CD4-positive, alpha-beta T cell (primary cell): ENCODE measurements at regions of chr15 and their contacts with region 1.

Region 1: GRCh38 chr15:79989682-79990081 is 18.7 kb upstream of the BCL2A1 start:
- DNase-seq: peak in 2 of 14 experiments; percentile 40 to 53
- ATAC-seq: no peak
- H3K4me3 ChIP-seq: no peak overlapping the region
- H3K4me3 Mint-ChIP-seq: no peak overlapping the region
- H3K27ac ChIP-seq: no peak overlapping the region
- H3K27ac Mint-ChIP-seq: no peak overlapping the region
- H3K4me1 ChIP-seq: peaks cover 4% of the 10 kb centered on the region
- H3K4me1 Mint-ChIP-seq: peaks cover 4% of the 10 kb centered on the region
- H3K27me3 ChIP-seq: no peaks in the 10 kb centered on the region
- H3K27me3 Mint-ChIP-seq: no peaks in the 10 kb centered on the region
- CTCF ChIP-seq: no peak

Region 2: DNA sequence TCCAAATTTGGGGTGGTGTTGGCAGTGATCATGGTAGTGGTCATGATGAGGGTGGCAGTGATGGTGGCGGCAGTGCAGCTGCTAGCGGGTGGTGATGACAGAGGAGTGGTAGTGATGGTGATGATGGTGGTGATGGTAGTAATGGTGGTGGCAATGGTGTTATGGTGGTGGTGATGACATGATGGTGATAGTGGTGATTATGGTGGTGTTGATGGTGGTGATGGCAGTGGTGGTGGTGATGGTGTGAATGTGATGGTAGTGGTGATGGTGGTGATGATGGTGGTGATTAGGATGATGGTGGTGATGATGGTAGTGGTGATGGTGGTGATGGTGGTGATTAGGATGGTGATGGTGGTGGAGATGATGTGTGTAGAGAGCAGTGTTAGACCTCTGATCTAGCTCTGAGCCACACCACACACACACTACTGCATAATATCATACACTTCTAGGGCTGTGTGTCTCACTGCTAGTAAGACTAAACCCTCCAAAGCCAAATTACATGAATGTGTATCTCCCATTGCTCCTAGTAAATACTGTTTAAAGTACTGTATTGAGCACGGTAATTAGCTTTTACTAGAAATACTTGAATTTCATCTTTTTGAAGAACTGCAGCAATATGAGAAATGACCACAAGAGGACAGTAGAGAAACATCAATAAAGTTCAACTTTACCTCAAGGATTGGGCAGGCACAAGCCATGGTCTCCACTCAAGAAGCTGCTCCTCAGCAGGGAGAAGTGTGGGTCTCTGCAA is 649.9 kb before region 1 on chr15:
- CTCF ChIA-PET with region 1: no interaction called
- POLR2A ChIA-PET with region 1: no interaction called
- intact Hi-C with region 1: loop called in 1 of 2 experiments (anchors 1 kb)
- DNase-seq: peak in 3 of 14 experiments; percentile 9 to 22 (median 21)
- ATAC-seq: no peak
- H3K4me3 ChIP-seq: no peak overlapping the region
- H3K4me3 Mint-ChIP-seq: no peak overlapping the region
- H3K27ac ChIP-seq: no peak overlapping the region
- H3K27ac Mint-ChIP-seq: no peak overlapping the region
- H3K4me1 ChIP-seq: no peaks in the 10 kb centered on the region
- H3K4me1 Mint-ChIP-seq: no peaks in the 10 kb centered on the region
- H3K27me3 ChIP-seq: no peaks in the 10 kb centered on the region
- H3K27me3 Mint-ChIP-seq: no peaks in the 10 kb centered on the region
- CTCF ChIP-seq: peak; percentile 57

Region 3: GRCh38 chr15:79769069-79769481 is 220.6 kb before region 1 on chr15:
- CTCF ChIA-PET with region 1: no interaction called
- POLR2A ChIA-PET with region 1: no interaction called
- intact Hi-C with region 1: loop called in 1 of 2 experiments (anchors 5 kb)
- DNase-seq: peak in 3 of 14 experiments; percentile 4 to 15 (median 13)
- ATAC-seq: no peak
- H3K4me3 ChIP-seq: no peak overlapping the region
- H3K4me3 Mint-ChIP-seq: no peak overlapping the region
- H3K27ac ChIP-seq: no peak overlapping the region
- H3K27ac Mint-ChIP-seq: no peak overlapping the region
- H3K4me1 ChIP-seq: no peaks in the 10 kb centered on the region
- H3K4me1 Mint-ChIP-seq: no peaks in the 10 kb centered on the region
- H3K27me3 ChIP-seq: no peaks in the 10 kb centered on the region
- H3K27me3 Mint-ChIP-seq: peaks cover 18% of the 10 kb centered on the region
- CTCF ChIP-seq: no peak

Region 4: DNA sequence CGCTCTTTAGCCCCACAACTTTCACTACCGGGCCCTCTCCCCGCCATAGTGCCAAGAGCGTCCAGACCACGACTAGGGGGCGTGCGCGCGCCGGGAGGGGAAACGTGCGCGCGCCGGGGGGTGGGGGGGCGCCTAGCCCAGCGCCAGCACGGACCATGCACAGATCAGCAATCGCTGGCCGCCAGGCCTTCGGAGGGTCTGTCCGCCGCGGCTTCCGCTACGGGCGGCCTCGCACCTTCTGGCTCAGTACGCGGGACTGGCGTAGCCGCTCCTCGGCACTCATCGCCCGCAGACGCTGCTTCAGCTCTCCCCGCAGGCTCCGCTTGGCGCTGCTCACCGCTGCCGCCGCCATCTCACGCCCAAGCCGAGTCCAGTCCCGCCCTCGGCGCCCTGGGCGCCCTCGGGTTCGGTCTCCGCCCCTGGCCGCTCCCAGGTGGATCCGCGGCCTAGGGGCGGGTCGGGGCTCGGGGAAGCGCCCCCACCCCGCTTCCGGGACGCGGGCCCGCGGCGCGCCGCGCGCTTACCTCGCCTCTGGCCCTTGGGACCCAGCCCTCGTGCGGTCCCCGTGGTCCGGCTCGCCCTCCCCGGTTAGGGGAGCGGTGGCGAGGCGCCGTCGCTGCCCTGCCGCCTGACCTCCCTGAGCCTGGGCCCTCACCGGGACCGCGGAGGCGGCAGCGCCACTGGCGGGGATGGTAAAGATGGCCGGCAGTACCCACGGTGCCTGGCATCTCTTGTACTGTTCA is 92.9 kb before region 1 on chr15 and contains the start of gene MTHFS:
- CTCF ChIA-PET with region 1: interaction called, 5 read pairs
- POLR2A ChIA-PET with region 1: interaction called, 8 read pairs
- intact Hi-C with region 1: loop called (anchors 1 kb)
- DNase-seq: peak; percentile 61 to 94 (median 77)
- ATAC-seq: peak; percentile 85
- H3K4me3 ChIP-seq: peak within 1 kb of the TSS; percentile 80
- H3K4me3 Mint-ChIP-seq: peak within 1 kb of the TSS; percentile 97
- H3K27ac ChIP-seq: peak within 1 kb of the TSS; percentile 93 to 95
- H3K27ac Mint-ChIP-seq: peak within 1 kb of the TSS; percentile 97
- H3K4me1 ChIP-seq: peaks cover 16% of the 10 kb centered on the region
- H3K4me1 Mint-ChIP-seq: peaks cover 42% of the 10 kb centered on the region
- H3K27me3 ChIP-seq: no peaks in the 10 kb centered on the region
- H3K27me3 Mint-ChIP-seq: no peaks in the 10 kb centered on the region
- CTCF ChIP-seq: peak; percentile 41
- total RNA-seq, gene MTHFS: 9.1 to 9.8 TPM

Region 5: GRCh38 chr15:79953951-79954444 is 35.7 kb before region 1 on chr15:
- CTCF ChIA-PET with region 1: no interaction called
- POLR2A ChIA-PET with region 1: no interaction called
- intact Hi-C with region 1: no loop called
- DNase-seq: peak in 2 of 14 experiments; percentile 36 to 52
- ATAC-seq: peak; percentile 48
- H3K4me3 ChIP-seq: no peak overlapping the region
- H3K4me3 Mint-ChIP-seq: no peak overlapping the region
- H3K27ac ChIP-seq: peak overlapping the region in 1 of 2 donors; percentile 19
- H3K27ac Mint-ChIP-seq: peak overlapping the region; percentile 34
- H3K4me1 ChIP-seq: peaks cover 9% of the 10 kb centered on the region
- H3K4me1 Mint-ChIP-seq: peaks cover 20% of the 10 kb centered on the region
- H3K27me3 ChIP-seq: no peaks in the 10 kb centered on the region
- H3K27me3 Mint-ChIP-seq: no peaks in the 10 kb centered on the region
- CTCF ChIP-seq: no peak

Region 6: DNA sequence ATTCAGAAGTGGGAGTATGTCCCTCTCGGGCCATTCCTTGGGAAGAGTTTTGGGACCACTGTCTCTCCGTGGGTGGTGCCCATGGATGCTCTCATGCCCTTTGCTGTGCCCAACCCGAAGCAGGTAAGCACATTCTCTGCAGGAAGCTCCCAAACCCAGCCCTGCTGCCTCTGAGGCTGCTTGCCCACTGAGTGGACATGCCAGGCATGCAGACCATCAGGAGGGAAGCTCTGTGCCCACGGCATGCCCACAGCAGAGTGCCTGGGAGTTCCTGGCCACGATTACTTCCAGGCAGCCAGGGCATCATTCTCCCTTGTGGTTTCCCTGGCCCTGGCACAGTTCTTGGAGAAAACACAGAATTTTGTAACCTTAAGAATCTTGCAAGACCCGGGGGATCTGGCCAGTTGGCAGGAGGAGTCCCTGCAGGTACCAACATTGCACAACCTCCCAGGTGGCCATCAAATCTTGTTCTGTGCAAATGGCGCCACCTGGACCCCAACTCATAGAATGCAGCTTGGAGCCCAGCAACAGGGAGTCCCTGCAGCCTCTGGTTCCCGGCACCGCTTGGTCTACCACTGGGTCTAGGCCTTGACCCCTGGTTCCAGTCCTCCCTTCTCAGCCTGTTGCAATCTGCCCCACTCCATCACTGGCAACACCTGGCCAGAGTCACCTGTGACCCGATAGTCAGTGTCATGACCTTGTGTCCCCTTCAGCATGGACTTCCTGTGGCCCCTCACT is 183.5 kb after region 1 on chr15:
- CTCF ChIA-PET with region 1: interaction called, 3 read pairs
- POLR2A ChIA-PET with region 1: no interaction called
- intact Hi-C with region 1: loop called in 1 of 2 experiments (anchors 2 kb)
- DNase-seq: peak; percentile 52 to 78 (median 64)
- ATAC-seq: peak; percentile 77
- H3K4me3 ChIP-seq: no peak overlapping the region
- H3K4me3 Mint-ChIP-seq: no peak overlapping the region
- H3K27ac ChIP-seq: no peak overlapping the region
- H3K27ac Mint-ChIP-seq: no peak overlapping the region
- H3K4me1 ChIP-seq: no peaks in the 10 kb centered on the region
- H3K4me1 Mint-ChIP-seq: no peaks in the 10 kb centered on the region
- H3K27me3 ChIP-seq: no peaks in the 10 kb centered on the region
- H3K27me3 Mint-ChIP-seq: no peaks in the 10 kb centered on the region
- CTCF ChIP-seq: peak; percentile 64